Dendritic cell treated with granulocyte-macrophage colony-stimulating factor and Interleukin-4, amounts not matched to agents 40 ng/mL and 50 ng/mL, for 4 days (primary cell): ENCODE measurements at regions of chr17 and their contacts with region 1.

Region 1: DNA sequence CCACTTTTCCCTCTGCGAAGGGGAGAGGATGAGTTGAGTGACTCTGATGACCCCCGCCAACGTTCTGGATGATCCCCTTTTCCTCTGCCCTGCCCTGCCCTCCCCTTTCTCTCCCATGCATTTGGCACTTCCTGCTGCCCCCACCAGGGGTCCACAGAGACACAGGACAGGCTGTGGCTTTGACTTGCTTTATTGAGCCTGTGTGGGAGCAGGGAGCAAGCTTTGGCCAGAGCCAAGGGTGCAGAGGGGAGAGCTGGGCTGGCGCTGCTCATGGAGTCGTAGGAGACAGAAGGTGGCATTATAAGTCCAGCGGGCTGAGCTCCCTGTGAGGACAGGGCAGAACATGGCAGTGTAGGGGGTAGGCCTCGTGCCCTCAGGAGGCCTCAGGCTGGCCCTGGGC is 1.6 kb downstream of the PPY start:
- H3K4me3 Mint-ChIP-seq: no peak overlapping the region
- H3K27ac Mint-ChIP-seq: no peak overlapping the region
- H3K4me1 Mint-ChIP-seq: peaks cover 13% of the 10 kb centered on the region
- H3K27me3 Mint-ChIP-seq: peaks cover 48% of the 10 kb centered on the region

Region 2: DNA sequence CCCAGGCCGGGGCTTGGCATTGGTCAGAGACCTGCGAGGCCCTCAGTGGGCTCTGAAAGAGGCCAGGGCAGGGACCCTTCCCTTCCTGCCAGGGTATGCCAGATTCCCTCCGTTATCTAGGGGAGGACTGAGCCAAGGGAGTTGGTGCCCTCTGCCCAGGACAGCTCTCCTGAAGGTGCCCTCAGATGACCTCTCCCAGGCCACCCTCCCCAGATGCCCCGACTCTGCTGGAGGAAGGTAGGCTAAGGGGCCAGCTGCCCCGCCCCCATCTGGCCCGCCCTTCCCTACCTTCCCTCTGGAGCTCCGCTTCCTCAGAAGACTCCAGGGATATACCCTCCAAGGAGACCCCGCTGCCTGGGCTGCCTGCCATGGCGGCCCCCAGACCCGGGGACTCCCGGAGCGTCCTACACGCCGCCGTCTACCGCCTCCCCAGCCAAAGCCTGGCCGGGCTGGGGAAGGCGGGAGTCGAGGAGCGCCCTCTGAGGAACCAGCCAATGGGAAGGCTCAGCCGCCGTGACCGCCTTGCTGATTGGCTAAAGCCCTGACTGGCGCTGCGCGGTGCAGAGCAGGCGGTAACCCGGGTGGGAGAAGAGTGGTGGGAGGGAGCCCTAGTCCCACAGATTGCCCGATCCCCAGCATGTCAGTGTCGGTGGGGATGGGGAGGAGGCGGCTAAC is 40.3 kb before region 1 on chr17:
- intact Hi-C with region 1: no loop called
- H3K4me3 Mint-ChIP-seq: peak overlapping the region; percentile 70
- H3K27ac Mint-ChIP-seq: peak overlapping the region; percentile 40
- H3K4me1 Mint-ChIP-seq: peaks cover 13% of the 10 kb centered on the region
- H3K27me3 Mint-ChIP-seq: peaks cover 62% of the 10 kb centered on the region

Region 3: DNA sequence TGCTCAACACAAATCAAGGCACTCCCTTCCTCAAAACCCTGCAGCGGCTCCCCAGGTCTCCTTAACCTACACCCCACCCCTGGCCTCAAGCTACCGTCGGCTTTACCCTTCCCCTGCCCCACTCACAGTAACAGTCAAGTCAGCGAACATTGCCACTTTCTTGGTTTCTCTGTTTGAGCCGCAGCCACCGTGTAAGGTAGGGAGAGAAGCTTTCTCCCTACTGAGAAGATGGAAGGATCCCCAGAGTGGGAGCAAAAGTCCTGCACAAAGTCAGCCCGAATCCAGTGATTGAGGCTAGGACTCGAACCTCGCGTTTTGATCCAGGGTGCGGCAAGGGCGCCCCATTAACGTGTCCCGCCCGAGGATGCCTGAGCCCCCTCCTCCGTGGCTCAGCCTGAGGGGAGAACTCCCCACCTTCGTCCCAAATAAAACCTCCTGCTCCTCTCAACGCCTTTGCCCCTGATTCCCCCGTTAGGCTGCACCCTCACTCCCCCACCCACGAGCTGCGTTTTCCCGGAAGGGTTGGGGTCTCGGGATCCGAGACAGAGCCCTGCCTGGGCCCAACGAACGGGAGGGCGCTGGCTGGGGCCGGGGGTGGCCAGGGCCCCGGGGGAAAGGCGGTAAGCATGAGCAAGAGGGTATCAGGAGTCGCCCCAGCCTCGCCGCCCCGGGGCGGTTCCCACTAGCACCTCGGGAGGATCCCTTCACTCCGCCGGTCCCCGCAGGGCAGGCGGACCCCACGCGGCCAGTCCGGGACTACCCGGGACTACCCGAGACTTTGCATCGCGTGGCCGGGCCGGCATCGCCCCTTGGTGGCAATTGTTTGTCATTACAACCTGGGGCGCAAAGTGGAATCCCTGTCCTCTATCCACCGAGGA is 53.9 kb after region 1 on chr17:
- intact Hi-C with region 1: loop called (anchors 1 kb)
- H3K4me3 Mint-ChIP-seq: no peak overlapping the region
- H3K27ac Mint-ChIP-seq: no peak overlapping the region
- H3K4me1 Mint-ChIP-seq: peaks cover 17% of the 10 kb centered on the region
- H3K27me3 Mint-ChIP-seq: peaks cover 32% of the 10 kb centered on the region

Region 4: DNA sequence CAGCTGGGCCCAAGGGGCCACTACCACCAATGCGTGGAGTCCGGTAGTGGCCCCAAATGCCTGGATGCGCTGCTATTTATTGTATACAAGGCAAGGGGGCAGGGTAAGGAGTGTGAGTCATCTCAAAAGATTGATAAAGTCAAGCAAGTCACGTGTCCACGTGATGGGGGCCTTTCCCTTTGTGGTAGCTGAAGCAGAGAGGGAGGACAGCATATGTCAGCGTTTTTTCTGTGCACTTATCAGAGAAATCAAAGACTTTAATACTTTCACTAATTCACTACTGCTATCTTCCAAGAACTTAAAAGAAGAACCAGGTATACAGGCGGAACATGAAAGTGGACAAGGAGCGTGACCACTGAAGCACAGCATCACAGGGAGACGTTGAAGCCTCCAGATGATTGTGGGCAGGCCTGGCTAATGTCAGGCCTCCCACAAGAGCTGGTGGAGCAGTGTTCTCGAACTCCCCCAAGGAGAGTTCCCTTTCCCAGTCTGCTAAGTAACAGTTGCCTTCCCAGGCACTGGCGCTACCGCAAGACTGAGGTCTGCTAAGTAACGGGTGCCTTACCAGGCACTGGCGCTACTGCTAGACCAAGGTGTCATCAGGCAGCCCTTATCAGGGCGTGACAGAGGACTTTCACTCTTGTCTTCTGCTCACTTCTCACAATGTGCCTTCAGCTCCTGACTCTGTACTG is 219.0 kb after region 1 on chr17:
- intact Hi-C with region 1: loop called (anchors 10 kb)
- H3K4me3 Mint-ChIP-seq: no peak overlapping the region
- H3K27ac Mint-ChIP-seq: peak overlapping the region; percentile 64
- H3K4me1 Mint-ChIP-seq: peaks cover 4% of the 10 kb centered on the region
- H3K27me3 Mint-ChIP-seq: no peaks in the 10 kb centered on the region

Region 5: GRCh38 chr17:44198721-44199552 is 258.3 kb after region 1 on chr17:
- intact Hi-C with region 1: no loop called
- H3K4me3 Mint-ChIP-seq: peak overlapping the region; percentile 83
- H3K27ac Mint-ChIP-seq: peak overlapping the region; percentile 94
- H3K4me1 Mint-ChIP-seq: peaks cover 72% of the 10 kb centered on the region
- H3K27me3 Mint-ChIP-seq: no peaks in the 10 kb centered on the region